ENCODE measurements at regions of chr2 and their contacts with region 1.

Region 1: DNA sequence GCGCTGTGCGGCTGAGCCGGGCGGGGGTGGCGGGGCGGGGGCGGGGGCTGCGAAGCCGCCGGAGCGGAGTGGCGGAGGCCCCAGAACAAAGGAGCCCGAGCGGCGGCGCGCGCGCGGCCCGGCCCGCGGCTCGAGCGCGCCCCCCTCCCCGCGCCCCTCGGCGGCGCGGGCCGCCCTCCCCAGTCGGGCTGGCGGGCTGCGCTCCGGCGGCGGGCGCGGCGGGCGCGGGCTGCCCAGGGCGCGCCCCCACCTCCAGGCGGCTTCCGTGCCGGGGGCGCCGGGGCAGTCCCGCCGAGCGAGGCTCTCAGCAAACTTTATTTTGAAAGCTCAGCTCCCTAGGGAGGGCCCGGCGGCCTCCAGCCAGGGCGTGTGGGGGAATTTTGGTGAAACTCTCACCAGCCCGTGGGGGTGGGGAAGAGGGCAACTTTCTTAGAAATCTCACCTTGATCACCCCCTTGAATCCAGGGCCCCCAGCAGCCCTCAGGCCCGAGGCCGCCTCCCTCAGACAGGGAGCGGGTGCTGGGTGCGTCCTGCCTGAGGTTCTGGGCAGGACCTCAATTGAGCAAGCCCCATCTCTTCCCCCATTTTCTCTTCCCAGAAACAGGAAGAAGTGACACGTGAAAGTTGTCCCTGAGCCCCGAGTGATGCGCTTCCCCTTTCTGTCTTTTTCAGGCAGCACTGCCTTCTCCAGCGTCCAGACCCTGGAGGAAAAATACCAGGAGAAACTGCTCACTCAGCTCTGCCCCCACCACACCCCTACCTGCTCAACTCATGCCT is 786 bp downstream of the TET3 start:
- DNase-seq: no peak
- H3K4me3 Mint-ChIP-seq: peak overlapping the region; percentile 81
- H3K27ac Mint-ChIP-seq: peak overlapping the region; percentile 91
- H3K4me1 Mint-ChIP-seq: peaks cover 81% of the 10 kb centered on the region
- H3K27me3 Mint-ChIP-seq: peaks cover 29% of the 10 kb centered on the region

Region 2: DNA sequence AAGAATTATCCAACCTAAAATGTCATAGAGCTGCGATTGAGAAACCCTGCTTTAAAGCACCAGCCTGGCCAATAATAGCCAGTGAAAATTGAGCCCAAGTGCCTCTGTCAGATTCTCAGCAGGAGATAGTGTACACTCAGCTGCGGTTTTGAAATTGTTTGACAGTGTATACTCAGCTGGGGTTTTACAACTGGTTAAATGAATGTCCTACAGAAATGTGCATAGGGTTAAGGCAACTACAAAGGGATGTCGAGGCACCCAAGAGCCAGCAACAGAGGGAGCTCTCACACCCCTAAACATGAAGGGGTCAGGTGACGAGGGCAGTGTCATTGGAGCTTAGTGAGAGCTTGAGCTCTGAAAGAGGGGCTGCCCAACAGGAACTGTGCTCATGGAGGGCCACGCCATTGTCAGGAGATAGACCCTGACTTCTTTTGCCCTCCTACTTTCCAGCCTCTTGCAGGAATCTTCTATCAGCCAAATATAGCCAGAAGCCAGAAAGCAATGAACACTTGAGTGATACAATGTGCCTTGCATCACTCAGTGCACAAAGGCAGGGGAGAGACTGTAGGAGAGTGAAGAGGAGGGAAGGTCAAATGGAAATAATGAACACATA is 77.5 kb before region 1 on chr2:
- intact Hi-C with region 1: loop called (anchors 1 kb)
- DNase-seq: no peak
- H3K4me3 Mint-ChIP-seq: no peak overlapping the region
- H3K27ac Mint-ChIP-seq: no peak overlapping the region
- H3K4me1 Mint-ChIP-seq: peaks cover 9% of the 10 kb centered on the region
- H3K27me3 Mint-ChIP-seq: no peaks in the 10 kb centered on the region

Region 3: DNA sequence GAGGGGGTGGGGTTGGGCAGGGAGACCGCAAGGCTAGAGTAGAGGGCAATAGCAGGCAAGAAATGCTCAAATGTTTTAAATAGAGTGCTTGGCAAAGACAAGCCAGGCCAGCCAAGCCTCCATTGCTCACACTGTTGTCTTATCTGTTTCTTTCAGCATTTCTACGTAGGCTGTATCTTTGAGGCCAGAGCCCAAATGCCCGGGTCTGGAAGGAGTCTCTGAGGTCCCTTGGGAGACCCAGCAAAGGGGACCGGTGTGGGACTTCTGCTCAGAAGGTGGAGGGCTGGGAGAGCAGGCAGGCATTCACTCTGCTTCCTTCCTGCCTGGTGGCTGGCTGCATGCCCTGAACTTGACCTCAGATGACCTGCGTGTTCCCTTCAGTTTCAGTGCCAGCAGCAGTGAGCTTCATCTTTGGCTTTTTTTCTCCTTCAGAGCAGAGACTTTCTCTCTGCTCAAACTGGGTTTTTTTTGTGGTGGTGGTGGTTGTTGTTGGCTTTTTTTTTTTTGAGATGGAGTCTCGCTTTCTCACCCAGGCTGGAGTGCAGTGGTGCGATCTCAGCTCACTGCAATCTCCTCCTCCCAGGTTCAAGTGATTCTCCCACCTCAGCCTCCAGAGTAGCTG is 14.5 kb before region 1 on chr2:
- intact Hi-C with region 1: loop called (anchors 2 kb)
- DNase-seq: peak; percentile 32
- H3K4me3 Mint-ChIP-seq: peak overlapping the region; percentile 69
- H3K27ac Mint-ChIP-seq: peak overlapping the region; percentile 79
- H3K4me1 Mint-ChIP-seq: peaks cover 38% of the 10 kb centered on the region
- H3K27me3 Mint-ChIP-seq: no peaks in the 10 kb centered on the region

Region 4: DNA sequence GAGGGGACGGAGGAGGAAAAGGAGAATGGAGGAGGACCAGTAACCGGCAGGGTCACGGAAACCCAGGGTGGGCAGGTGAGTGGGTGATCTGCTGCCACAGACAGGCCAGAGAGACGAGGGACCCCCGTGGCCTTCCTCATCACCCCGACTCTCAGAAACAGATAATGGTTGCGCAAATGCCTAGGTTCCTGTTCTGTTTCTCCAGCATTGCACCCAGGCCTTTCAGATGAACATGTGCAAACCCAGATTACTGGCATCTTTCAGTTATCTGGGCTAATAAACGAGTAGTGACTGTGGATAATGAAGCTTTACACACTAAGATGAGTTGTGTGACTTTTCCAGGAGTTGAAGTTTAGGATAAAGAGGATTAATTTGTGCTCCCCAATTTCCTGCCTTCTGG is 45.7 kb after region 1 on chr2:
- intact Hi-C with region 1: loop called (anchors 5 kb)
- DNase-seq: no peak
- H3K4me3 Mint-ChIP-seq: peak overlapping the region; percentile 45
- H3K27ac Mint-ChIP-seq: peak overlapping the region; percentile 45
- H3K4me1 Mint-ChIP-seq: peaks cover 67% of the 10 kb centered on the region
- H3K27me3 Mint-ChIP-seq: no peaks in the 10 kb centered on the region

Region 5: GRCh38 chr2:74198461-74199274 is 213.2 kb after region 1 on chr2 and contains the start of gene MTHFD2:
- intact Hi-C with region 1: loop called (anchors 5 kb)
- DNase-seq: peak; percentile 91
- H3K4me3 Mint-ChIP-seq: peak within 1 kb of the TSS; percentile 98
- H3K27ac Mint-ChIP-seq: peak within 1 kb of the TSS; percentile 100
- H3K4me1 Mint-ChIP-seq: peaks cover 59% of the 10 kb centered on the region
- H3K27me3 Mint-ChIP-seq: no peaks in the 10 kb centered on the region
- total RNA-seq, gene MTHFD2: 437 and 457 TPM in 2 replicates

Measured in activated T-helper 1 cell treated with anti-CD3 and anti-CD28 coated beads, Interleukin-12 subunit alpha, Interleukin-12 subunit beta, Interleukin-2, Interleukin-4 antibody, amounts not matched to agents 30 ng/mL and 10 ng/mL and 1 ng/mL, durations not matched to agents 14 hours and 24 hours and 36 hours (primary cell).